ENCODE measurements at regions of chr13 and their contacts with region 1.

Region 1: DNA sequence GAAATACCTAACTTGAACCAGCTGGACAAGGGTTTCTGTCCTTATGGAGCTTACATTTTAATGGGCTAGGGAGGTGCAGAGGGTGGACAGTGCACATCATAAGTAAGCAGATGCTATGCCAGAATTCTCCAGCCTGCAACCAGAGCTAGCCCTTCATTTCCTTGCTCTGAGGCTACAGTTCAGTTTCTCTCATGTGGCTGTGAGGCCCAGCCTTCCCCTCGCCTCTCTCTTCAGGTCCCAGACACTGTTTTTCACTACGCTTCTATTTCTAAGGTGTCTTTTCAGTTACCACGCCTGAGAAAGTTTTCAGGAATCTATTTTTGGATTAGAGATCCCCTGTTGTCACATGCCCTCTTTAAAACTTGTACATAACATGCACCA is 141.9 kb downstream of the PCCA start:
- DNase-seq: no peak
- H3K4me3 Mint-ChIP-seq: no peak overlapping the region
- H3K27ac Mint-ChIP-seq: no peak overlapping the region
- H3K4me1 Mint-ChIP-seq: peaks cover 6% of the 10 kb centered on the region
- H3K27me3 Mint-ChIP-seq: no peaks in the 10 kb centered on the region

Region 2: GRCh38 chr13:100301418-100301817 is 70.7 kb after region 1 on chr13:
- CTCF ChIA-PET with region 1: no interaction called
- POLR2A ChIA-PET with region 1: no interaction called
- DNase-seq: no peak
- H3K4me3 Mint-ChIP-seq: no peak overlapping the region
- H3K27ac Mint-ChIP-seq: no peak overlapping the region
- H3K4me1 Mint-ChIP-seq: no peaks in the 10 kb centered on the region
- H3K27me3 Mint-ChIP-seq: no peaks in the 10 kb centered on the region

Region 3: DNA sequence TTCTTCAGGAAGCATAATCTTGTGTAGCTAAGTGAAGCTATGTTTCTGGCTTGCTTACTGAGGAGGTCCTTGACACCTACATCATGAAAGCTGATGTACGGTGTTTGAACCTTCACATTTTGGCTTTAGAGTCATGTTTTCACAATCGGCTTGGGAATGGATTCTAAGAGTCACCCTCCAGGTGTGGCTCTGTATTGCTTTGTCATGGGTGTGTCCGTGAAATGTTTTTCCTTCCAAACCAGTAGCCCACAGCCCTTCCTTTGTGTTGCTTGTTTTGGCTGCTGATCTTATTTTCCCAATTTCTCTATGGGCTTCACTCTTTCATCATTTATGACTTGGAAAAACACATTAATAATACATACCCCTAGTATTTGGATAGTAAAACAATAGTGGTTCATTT is 117.2 kb after region 1 on chr13:
- CTCF ChIA-PET with region 1: no interaction called
- POLR2A ChIA-PET with region 1: interaction called, 12 read pairs
- DNase-seq: no peak
- H3K4me3 Mint-ChIP-seq: no peak overlapping the region
- H3K27ac Mint-ChIP-seq: no peak overlapping the region
- H3K4me1 Mint-ChIP-seq: peaks cover 4% of the 10 kb centered on the region
- H3K27me3 Mint-ChIP-seq: no peaks in the 10 kb centered on the region

Measured in activated CD4-positive, alpha-beta T cell treated with anti-CD3 and anti-CD28 coated beads, Interleukin-2, amount 10 ng/mL, durations not matched to agents 7 days and 5 days (primary cell).